ENCODE measurements at regions of chr3 and their contacts with region 1.

Region 1: DNA sequence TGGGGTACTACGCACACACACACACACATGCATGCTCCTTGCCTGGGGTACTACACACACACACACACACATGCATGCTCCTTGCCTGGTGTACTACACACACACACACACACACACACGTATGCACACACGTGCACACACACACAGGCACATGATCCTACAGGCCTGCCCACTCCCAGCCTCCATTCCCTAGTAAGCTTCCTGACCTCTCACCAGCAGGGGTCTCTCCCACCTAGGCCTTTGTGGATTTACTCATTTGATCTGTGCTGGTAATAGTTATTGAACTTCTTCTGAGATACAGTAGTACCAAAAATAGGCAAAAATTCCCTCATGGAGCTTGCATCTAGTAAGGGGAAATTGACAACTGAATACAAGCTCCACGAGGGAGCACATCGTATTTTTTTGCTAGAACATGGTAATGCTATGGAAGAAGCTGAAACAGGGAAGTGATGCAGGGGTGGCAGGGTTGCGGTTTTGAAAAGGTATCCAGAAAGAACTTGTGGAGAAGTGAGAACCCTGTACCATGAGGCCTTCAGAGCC is 19.1 kb downstream of the TTC21A start:
- DNase-seq: peak; percentile 80
- H3K4me3 Mint-ChIP-seq: no peak overlapping the region
- H3K27ac Mint-ChIP-seq: no peak overlapping the region
- H3K4me1 Mint-ChIP-seq: peaks cover 18% of the 10 kb centered on the region
- H3K27me3 Mint-ChIP-seq: no peaks in the 10 kb centered on the region

Region 2: DNA sequence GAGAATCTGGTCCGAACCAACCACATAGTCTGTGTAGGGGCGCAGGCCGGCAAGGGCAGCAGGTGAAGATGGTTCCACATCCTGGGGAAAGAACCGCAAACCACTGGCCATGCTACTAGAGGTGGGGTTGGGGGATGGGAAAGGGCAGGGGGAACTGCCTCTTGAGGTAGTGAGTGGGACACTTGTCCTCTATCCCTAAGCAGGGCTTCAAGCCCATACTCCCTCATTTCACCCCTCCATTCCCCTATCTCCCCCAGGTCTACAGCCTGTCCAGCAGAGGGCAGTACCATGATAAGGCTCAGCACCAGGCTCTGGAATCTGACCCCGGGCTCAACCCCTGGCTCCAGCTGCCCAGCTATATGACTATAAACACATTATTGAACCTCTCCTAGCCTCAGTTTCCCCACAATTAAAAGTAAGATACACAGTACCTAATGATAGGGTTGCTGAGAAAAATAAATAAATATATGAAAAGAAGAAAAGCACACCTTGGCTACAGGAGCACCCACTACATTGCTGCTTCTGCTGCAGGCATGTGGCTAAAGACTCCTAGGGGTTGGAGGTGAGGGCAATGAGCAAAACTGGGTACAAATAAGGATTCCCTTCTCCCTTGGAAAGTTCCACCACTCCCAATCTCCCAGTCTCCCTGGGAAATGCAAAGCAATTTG is 25.4 kb before region 1 on chr3:
- CTCF ChIA-PET with region 1: interaction called, 5 read pairs
- intact Hi-C with region 1: loop called (anchors 2 kb)
- DNase-seq: peak; percentile 63
- H3K4me3 Mint-ChIP-seq: no peak overlapping the region
- H3K27ac Mint-ChIP-seq: no peak overlapping the region
- H3K4me1 Mint-ChIP-seq: peaks cover 28% of the 10 kb centered on the region
- H3K27me3 Mint-ChIP-seq: no peaks in the 10 kb centered on the region

Region 3: DNA sequence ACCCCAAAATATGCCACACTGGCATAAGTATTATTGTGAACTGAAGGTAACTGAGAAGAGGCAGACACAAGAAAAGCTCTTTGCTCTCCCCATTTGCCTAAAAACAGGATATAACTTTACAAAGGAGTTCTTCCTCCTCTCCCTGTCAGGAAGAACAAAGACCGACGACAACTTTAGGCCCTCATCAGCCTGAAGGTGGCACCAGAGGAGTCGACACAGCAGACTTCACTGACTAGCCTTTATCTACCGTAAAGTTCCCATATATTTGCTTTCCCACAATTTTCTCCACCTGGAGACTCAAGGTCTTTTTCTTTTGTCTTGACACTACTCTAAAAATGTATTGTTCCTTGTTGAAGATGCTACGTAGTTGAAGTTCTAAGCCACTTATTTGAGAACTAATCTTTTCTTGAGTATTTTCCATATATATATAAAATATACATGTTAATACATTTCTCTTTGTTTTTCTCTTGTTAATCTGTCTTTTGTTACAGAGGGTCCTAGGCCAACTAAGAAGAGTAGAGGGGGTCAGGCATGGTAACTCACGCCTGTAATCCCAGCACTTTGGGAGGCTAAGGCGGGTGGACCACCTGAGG is 82.0 kb after region 1 on chr3:
- CTCF ChIA-PET with region 1: interaction called, 3 read pairs
- intact Hi-C with region 1: loop called (anchors 1 kb)
- DNase-seq: peak; percentile 72
- H3K4me3 Mint-ChIP-seq: no peak overlapping the region
- H3K27ac Mint-ChIP-seq: no peak overlapping the region
- H3K4me1 Mint-ChIP-seq: peaks cover 8% of the 10 kb centered on the region
- H3K27me3 Mint-ChIP-seq: no peaks in the 10 kb centered on the region

Measured in activated naive CD4-positive, alpha-beta T cell treated with anti-CD3 and anti-CD28 coated beads for 36 hours (primary cell).